ENCODE measurements at regions of chr2 and their contacts with region 1.

Region 1: DNA sequence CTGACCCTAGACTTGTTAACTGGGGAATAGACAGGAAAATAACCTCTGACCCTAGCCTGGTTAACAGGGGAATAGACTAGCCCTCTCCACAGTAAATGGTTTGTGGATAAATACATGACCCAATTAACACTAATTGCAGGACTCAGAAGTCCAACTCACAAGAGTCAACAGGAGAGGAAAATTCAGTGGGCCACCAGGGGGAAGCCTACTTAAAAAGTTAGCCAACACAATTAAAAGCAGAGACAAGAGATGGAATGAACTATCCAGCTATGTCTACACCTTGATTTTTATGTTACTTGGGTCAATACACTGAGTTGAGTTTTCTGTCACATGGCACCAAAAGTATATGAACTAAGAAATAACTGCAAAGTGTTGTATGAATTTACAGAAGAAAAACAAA is 158.8 kb upstream of the SLC39A10 start:
- DNase-seq: peak; percentile 62
- ATAC-seq: no peak
- H3K4me3 Mint-ChIP-seq: no peak overlapping the region
- H3K27ac Mint-ChIP-seq: no peak overlapping the region
- H3K4me1 Mint-ChIP-seq: peaks cover 35% of the 10 kb centered on the region
- H3K27me3 Mint-ChIP-seq: no peaks in the 10 kb centered on the region

Region 2: GRCh38 chr2:195370167-195370943 is 127.8 kb before region 1 on chr2:
- CTCF ChIA-PET with region 1: no interaction called
- POLR2A ChIA-PET with region 1: no interaction called
- DNase-seq: no peak
- ATAC-seq: no peak
- H3K4me3 Mint-ChIP-seq: no peak overlapping the region
- H3K27ac Mint-ChIP-seq: no peak overlapping the region
- H3K4me1 Mint-ChIP-seq: peaks cover 13% of the 10 kb centered on the region
- H3K27me3 Mint-ChIP-seq: no peaks in the 10 kb centered on the region

Region 3: DNA sequence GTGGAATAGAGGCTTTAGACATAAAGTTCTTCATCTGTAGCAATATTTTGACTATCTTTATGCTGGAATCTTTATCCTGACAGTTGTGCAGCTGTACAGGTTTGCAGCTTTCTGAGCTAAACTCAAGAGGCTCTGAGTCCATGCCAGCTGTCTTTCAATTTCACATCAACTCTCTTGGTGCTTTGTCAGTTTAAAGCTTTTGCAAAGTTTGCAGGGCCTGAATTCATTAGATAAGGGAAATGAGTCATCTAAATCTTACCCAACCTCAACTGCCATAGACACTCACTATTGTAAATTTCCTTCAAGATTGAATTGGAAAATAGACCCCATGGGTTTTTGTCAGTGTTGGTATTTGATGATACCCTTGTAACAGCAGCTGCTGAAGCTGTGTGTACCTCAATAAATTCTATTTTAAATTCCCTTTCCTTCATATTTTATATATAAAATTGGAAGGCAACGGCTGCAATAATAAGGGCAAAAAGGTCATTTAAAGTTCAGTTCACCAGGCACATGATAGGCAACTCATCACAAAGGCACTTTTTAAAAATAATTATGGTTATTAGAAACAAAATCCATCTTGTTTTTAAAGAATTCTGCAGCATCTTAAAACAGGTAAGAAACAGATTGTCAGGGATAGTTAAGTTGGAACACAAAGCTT is 11.1 kb before region 1 on chr2:
- CTCF ChIA-PET with region 1: interaction called, 10 read pairs
- POLR2A ChIA-PET with region 1: interaction called, 3 read pairs
- DNase-seq: peak; percentile 49
- ATAC-seq: peak; percentile 92
- H3K4me3 Mint-ChIP-seq: peak overlapping the region; percentile 13
- H3K27ac Mint-ChIP-seq: peak overlapping the region; percentile 78
- H3K4me1 Mint-ChIP-seq: peaks cover 37% of the 10 kb centered on the region
- H3K27me3 Mint-ChIP-seq: no peaks in the 10 kb centered on the region

Region 4: DNA sequence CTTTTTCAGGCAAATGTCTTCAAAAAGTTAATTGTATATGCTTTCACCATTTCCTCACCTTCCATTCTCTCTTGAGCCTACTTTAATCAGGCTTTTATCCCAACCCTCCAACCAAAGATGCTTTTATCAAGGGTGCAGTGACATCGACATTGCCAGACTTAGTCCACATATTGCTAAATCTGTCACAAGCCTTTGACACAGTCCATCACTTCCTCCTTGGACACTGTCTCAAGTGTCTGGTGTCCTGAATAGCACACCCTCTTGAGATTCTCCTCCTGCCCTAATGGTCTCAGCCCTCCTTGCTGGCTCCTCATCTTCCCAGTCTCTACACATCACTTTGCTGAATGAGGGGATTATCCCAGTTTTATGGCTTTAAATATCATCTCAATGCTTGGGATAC is 11.4 kb after region 1 on chr2:
- CTCF ChIA-PET with region 1: interaction called, 10 read pairs
- POLR2A ChIA-PET with region 1: interaction called, 4 read pairs
- DNase-seq: no peak
- ATAC-seq: no peak
- H3K4me3 Mint-ChIP-seq: no peak overlapping the region
- H3K27ac Mint-ChIP-seq: no peak overlapping the region
- H3K4me1 Mint-ChIP-seq: no peaks in the 10 kb centered on the region
- H3K27me3 Mint-ChIP-seq: no peaks in the 10 kb centered on the region